PC-3 (cell line): ENCODE measurements at regions of chr1 and their contacts with region 1.

Region 1: DNA sequence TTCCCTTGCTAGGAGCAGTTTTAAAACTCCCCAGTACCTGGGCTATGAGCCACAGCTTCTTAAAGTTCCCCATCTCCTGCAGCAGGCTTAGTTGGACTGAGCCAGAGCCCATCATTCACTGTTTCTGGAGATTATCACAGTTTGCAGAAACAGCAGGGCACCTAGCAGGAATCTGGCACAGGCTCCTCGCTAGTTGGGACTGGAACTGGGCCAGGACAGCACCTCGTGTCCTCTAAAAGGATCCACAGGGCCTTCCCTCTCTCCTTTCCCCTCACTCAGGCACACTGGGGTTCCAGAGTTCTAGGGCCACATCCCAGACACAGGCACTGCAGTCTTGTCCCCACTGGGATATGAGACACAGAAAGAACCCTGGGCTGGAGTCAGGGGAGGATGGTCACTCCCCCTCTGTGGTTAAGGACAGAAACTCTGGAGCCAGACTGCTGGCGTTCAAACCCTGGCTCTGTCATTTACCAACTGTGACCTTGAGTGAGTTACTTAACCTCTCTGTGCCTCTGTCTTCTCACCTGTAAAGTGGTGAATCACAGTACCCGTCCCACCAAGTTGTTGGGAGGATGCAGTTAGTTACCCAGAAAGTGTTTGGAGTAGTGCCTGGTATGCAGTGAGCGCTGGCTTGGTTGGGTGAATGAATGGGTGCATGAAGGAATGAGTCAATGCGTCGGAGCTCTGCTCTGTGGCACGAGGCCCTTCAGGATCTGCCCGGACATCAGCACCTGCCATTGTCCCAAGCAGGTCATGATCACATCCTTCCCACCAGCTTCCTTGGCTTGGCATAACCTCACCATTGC is 18.8 kb upstream of the ECE1 start:
- DNase-seq: peak; percentile 14
- ATAC-seq: no peak
- H3K4me3 ChIP-seq: no peak overlapping the region
- H3K27ac ChIP-seq: no peak overlapping the region
- H3K4me1 ChIP-seq: no peaks in the 10 kb centered on the region
- H3K27me3 ChIP-seq: no peaks in the 10 kb centered on the region
- CTCF ChIP-seq: no peak

Region 2: DNA sequence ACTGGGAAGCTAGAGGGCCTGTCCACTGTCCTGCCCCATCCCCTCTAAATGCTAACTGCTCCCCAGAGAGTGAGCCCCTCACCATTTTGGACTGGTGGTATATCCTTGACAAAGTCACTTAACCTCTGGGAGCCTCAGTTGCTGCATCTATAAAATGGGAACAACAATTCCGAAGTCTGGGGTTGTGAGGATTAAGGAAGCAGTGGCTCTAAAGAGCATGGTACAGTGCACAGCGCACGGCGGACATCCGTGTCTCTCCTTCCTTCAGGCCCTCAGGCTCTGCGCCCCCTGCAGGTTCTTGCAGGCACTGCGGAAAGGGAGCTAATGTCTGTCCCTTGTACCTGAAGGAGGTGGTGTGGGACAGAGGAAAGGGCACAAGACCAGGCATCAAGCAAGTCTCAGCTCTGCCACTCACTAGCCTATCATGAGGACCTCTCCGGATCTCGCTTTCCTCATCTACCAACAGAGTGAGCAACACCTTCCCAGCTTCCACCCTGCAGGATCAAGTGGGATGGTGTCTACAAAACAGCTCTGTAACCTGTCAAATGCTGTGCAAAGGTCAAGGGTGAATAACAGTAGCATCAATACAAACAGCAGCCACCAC is 38.9 kb before region 1 on chr1:
- CTCF ChIA-PET with region 1: no interaction called
- POLR2A ChIA-PET with region 1: interaction called, 10 read pairs
- intact Hi-C with region 1: no loop called
- DNase-seq: peak; percentile 75
- ATAC-seq: peak; percentile 45; the same call in 1 of the 2 replicates
- H3K4me3 ChIP-seq: no peak overlapping the region
- H3K27ac ChIP-seq: no peak overlapping the region
- H3K4me1 ChIP-seq: peaks cover 14% of the 10 kb centered on the region
- H3K27me3 ChIP-seq: no peaks in the 10 kb centered on the region
- CTCF ChIP-seq: peak; percentile 95

Region 3: GRCh38 chr1:21468599-21468998 is 159.5 kb after region 1 on chr1:
- CTCF ChIA-PET with region 1: no interaction called
- POLR2A ChIA-PET with region 1: no interaction called
- intact Hi-C with region 1: no loop called
- DNase-seq: peak; percentile 17
- ATAC-seq: no peak
- H3K4me3 ChIP-seq: no peak overlapping the region
- H3K27ac ChIP-seq: no peak overlapping the region
- H3K4me1 ChIP-seq: peaks cover 40% of the 10 kb centered on the region
- H3K27me3 ChIP-seq: no peaks in the 10 kb centered on the region
- CTCF ChIP-seq: peak; percentile 47